Heart left ventricle (tissue), 16 donors: ENCODE measurements at regions of chr6 and their contacts with region 1.

Region 1: DNA sequence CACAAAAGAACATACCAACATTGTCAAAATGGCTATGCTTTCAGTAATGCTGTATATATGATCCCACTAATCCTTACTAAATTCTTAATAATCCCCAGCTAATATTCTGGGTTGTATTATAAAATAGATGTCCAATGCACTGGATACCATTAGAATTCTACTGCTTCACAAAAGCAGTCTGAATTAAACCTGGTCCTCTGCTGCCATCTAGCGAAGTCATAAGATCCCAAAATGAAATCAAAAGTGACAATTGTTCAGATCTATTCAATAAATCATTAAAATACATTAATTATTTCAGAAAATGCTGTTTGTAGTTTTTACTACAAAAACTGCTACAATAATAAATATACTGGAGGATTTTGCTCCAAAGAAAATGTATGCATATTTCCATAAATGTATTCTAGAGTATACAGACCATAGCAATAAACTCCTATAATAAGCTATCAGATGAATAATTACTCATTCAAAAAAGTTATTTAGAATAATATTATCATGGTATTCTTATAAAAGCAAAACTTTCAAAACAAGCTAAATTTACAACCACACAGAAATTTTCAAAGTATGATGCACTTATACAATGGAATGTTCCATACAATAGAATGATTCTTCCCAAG is 92.6 kb downstream of the RNGTT start:
- DNase-seq: peak in 2 of 5 donors; percentile 26 to 32
- ATAC-seq: peak in 1 of 4 donors; percentile 39
- H3K4me3 ChIP-seq: no peak overlapping the region
- H3K27ac ChIP-seq: no peak overlapping the region
- H3K4me1 ChIP-seq: peaks cover 0 to 16% (median 0%) of the 10 kb centered on the region in 12 donors
- H3K27me3 ChIP-seq: no peaks in the 10 kb centered on the region
- CTCF ChIP-seq: peak; percentile 50 to 82 (median 67)
- POLR2A ChIP-seq: no peak

Region 2: DNA sequence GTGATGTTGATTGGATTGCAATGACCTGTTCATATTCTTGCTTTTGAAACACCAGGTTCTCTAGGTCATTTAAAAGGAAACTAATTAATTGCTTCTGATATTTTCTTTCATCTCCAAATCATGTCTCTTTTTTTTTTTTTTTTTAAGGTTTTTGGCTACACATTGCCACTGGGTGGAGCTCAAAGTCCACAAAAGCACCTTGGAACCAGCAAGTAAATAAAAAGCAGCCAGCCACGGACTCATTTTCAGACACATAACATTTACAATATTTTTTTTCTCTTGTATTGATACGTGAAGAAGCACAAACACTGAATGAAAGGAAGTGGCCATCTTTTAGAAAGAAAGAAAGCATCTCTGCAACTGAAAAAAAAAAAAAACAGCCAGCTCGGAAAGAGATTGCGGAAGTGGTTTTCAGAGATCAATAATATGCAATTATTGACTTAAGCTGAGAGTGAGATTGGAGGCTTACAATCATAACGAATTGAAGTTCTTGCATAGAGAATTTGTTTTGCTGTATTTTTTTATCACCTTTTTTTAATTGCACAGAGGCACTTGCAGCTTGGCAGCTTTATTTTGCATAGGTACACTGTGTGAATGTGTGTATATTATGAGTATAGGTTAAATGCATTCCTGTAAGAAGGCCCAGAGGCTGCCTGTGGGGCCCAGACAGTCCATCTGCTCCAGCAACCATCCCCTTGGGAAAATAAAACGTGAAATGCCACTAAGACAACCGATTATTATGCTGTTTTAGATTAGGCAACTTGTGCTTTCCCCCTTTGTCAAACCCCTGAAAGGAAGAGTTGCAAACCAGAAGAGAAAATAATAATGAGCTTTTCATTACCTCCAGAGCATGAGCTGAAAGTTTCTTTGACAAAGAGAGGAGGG is 1804.1 kb before region 1 on chr6:
- intact Hi-C with region 1: loop called in 3 of 10 experiments (anchors 5 to 10 kb)
- DNase-seq: peak in 3 of 5 donors; percentile 22 to 34 (median 24)
- ATAC-seq: no peak
- H3K4me3 ChIP-seq: peak overlapping the region in 1 of 12 donors; percentile 9
- H3K27ac ChIP-seq: no peak overlapping the region
- H3K4me1 ChIP-seq: no peaks in the 10 kb centered on the region
- H3K27me3 ChIP-seq: peaks cover 0 to 17% (median 0%) of the 10 kb centered on the region in 9 donors
- CTCF ChIP-seq: peak; percentile 20 to 64 (median 52)
- POLR2A ChIP-seq: no peak

Region 3: DNA sequence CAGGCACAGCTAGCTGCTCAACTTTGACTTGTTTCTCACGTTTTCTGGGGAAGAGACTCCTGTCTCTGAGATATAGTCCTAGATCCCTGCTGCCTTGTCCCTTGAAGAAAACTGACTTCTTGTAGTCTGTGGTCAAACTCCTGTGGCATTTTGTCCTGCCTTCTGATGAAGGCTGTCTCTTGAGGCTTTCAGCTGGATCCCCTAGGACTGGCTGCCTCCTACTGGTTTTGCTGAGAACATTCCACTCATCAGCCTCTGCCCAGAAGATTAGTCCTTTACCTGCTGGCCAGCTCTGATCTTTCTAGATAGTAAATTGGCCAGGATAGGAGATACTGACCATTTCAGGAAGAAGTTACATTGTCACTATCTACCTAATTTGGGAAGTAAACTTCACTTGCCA is 632.8 kb before region 1 on chr6:
- intact Hi-C with region 1: no loop called
- DNase-seq: no peak
- ATAC-seq: no peak
- H3K4me3 ChIP-seq: no peak overlapping the region
- H3K27ac ChIP-seq: no peak overlapping the region
- H3K4me1 ChIP-seq: no peaks in the 10 kb centered on the region
- H3K27me3 ChIP-seq: no peaks in the 10 kb centered on the region
- CTCF ChIP-seq: peak in 2 of 12 donors; percentile 10 to 14
- POLR2A ChIP-seq: no peak

Region 4: GRCh38 chr6:88780714-88781389 is 90.0 kb before region 1 on chr6:
- intact Hi-C with region 1: loop called in 1 of 10 experiments (anchors 10 kb)
- DNase-seq: peak in 4 of 5 donors; percentile 23 to 36 (median 27)
- ATAC-seq: peak in 3 of 4 donors; percentile 38 to 56 (median 44)
- H3K4me3 ChIP-seq: no peak overlapping the region
- H3K27ac ChIP-seq: no peak overlapping the region
- H3K4me1 ChIP-seq: peaks cover 0 to 2% (median 0%) of the 10 kb centered on the region in 12 donors
- H3K27me3 ChIP-seq: no peaks in the 10 kb centered on the region
- CTCF ChIP-seq: peak; percentile 74 to 95 (median 86)
- POLR2A ChIP-seq: no peak

Region 5: DNA sequence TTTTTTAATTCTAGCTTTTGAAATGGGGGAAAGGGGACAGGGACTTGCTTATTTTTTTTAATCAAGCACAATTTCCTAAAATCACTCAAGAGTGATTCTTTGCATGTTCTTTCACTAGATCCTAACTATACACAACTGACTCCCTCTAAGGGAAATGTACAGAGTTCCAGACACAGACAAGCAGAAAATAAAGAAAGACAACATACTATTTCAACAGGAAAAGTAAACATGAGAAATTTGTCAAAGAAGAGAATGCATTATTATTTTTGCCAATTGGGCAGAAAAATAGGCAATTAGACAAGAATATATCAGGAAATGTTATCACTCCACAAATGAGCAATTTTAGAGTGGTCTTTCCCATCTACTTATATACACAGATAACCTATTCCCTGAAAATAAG is 35.6 kb before region 1 on chr6:
- intact Hi-C with region 1: no loop called
- DNase-seq: no peak
- ATAC-seq: no peak
- H3K4me3 ChIP-seq: no peak overlapping the region
- H3K27ac ChIP-seq: no peak overlapping the region
- H3K4me1 ChIP-seq: peaks cover 0 to 2% (median 0%) of the 10 kb centered on the region in 12 donors
- H3K27me3 ChIP-seq: no peaks in the 10 kb centered on the region
- CTCF ChIP-seq: no peak
- POLR2A ChIP-seq: no peak